B cell (primary cell): ENCODE measurements at regions of chr1 and their contacts with region 1.

Region 1: GRCh38 chr1:28208818-28209441 is 23.9 kb downstream of the DNAJC8 start:
- DNase-seq: peak; percentile 80
- ATAC-seq: peak; percentile 86
- H3K4me3 ChIP-seq: no peak overlapping the region
- H3K4me3 Mint-ChIP-seq: no peak overlapping the region
- H3K27ac ChIP-seq: no peak overlapping the region
- H3K27ac Mint-ChIP-seq: no peak overlapping the region
- H3K4me1 ChIP-seq: no peaks in the 10 kb centered on the region
- H3K4me1 Mint-ChIP-seq: peaks cover 2% of the 10 kb centered on the region
- H3K27me3 ChIP-seq: no peaks in the 10 kb centered on the region
- H3K27me3 Mint-ChIP-seq: no peaks in the 10 kb centered on the region
- CTCF ChIP-seq: peak; percentile 91

Region 2: DNA sequence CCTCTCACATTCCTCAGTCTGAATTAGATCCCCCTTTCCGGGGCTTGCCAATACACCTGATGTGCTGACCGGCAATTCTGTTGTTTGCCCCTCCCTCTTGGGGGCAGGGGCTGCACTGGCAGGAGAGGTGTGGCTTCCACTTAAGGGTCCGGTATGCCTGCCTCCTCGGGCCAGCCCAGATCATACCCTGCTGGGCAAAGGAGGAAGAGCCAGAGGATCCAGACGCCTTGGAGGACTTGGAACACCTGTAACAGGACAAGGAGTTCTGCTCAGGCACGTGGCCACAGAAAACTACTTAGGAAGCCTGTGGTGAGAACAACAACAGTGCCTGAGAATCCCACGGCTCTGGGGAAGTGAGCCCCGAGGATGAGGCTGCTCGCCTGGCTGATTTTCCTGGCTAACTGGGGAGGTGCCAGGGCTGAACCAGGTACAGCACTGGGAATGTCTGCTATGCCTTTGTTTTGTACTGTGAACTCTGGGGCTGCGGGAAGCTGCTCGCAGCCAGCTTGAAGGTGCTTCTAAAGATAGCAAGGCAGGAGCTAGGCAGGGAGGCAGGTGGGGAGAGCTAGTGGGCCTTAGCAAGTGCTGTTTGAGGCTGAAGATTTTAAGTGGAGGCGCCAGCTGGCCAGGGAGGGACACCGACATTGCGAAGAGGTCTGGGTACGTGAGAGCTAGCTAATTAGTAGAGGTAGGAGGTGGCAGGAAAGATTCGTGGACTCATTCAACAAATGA is 273.9 kb before region 1 on chr1 and contains the start of gene SMPDL3B:
- CTCF ChIA-PET with region 1: interaction called, 16 read pairs
- POLR2A ChIA-PET with region 1: interaction called, 10 read pairs
- intact Hi-C with region 1: no loop called
- DNase-seq: no peak
- ATAC-seq: no peak
- H3K4me3 ChIP-seq: peak within 1 kb of the TSS in 1 of 5 experiments; percentile 21
- H3K4me3 Mint-ChIP-seq: peak within 1 kb of the TSS; percentile 4
- H3K27ac ChIP-seq: no peak within 1 kb of the TSS
- H3K27ac Mint-ChIP-seq: no peak within 1 kb of the TSS
- H3K4me1 ChIP-seq: peaks cover 12 to 16% of the 10 kb centered on the region in 2 donors
- H3K4me1 Mint-ChIP-seq: peaks cover 21% of the 10 kb centered on the region
- H3K27me3 ChIP-seq: peaks cover 0 to 19% (median 9%) of the 10 kb centered on the region in 4 experiments
- H3K27me3 Mint-ChIP-seq: peaks cover 18% of the 10 kb centered on the region
- CTCF ChIP-seq: no peak
- total RNA-seq, gene SMPDL3B: not detected in 2 replicates

Region 3: DNA sequence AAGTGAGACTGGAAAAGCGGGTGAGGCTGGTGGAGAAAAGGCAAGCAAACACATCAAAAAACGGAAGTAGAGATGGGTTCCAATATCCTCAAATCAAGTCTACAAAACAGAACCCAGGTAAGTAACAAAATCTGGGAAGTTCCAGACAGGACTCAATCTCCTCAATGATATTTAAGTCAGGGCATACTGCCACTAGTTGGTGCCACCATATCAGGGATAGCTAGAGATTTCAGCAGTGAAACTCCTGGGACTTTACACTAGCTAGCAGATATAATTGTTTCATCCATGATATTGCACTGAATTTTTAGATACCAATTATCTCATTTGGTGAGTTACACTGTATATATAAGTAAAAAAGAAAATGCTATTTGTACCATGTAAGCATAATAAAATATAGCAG is 172.5 kb before region 1 on chr1:
- CTCF ChIA-PET with region 1: interaction called, 11 read pairs
- POLR2A ChIA-PET with region 1: no interaction called
- intact Hi-C with region 1: no loop called
- DNase-seq: no peak
- ATAC-seq: no peak
- H3K4me3 ChIP-seq: no peak overlapping the region
- H3K4me3 Mint-ChIP-seq: no peak overlapping the region
- H3K27ac ChIP-seq: no peak overlapping the region
- H3K27ac Mint-ChIP-seq: no peak overlapping the region
- H3K4me1 ChIP-seq: no peaks in the 10 kb centered on the region
- H3K4me1 Mint-ChIP-seq: peaks cover 3% of the 10 kb centered on the region
- H3K27me3 ChIP-seq: no peaks in the 10 kb centered on the region
- H3K27me3 Mint-ChIP-seq: no peaks in the 10 kb centered on the region
- CTCF ChIP-seq: no peak

Region 4: GRCh38 chr1:28096205-28097099 is 112.5 kb before region 1 on chr1:
- CTCF ChIA-PET with region 1: interaction called, 357 read pairs
- POLR2A ChIA-PET with region 1: interaction called, 5 read pairs
- intact Hi-C with region 1: loop called (anchors 1 kb)
- DNase-seq: no peak
- ATAC-seq: peak; percentile 39
- H3K4me3 ChIP-seq: no peak overlapping the region
- H3K4me3 Mint-ChIP-seq: no peak overlapping the region
- H3K27ac ChIP-seq: no peak overlapping the region
- H3K27ac Mint-ChIP-seq: no peak overlapping the region
- H3K4me1 ChIP-seq: no peaks in the 10 kb centered on the region
- H3K4me1 Mint-ChIP-seq: no peaks in the 10 kb centered on the region
- H3K27me3 ChIP-seq: no peaks in the 10 kb centered on the region
- H3K27me3 Mint-ChIP-seq: no peaks in the 10 kb centered on the region
- CTCF ChIP-seq: no peak

Region 5: DNA sequence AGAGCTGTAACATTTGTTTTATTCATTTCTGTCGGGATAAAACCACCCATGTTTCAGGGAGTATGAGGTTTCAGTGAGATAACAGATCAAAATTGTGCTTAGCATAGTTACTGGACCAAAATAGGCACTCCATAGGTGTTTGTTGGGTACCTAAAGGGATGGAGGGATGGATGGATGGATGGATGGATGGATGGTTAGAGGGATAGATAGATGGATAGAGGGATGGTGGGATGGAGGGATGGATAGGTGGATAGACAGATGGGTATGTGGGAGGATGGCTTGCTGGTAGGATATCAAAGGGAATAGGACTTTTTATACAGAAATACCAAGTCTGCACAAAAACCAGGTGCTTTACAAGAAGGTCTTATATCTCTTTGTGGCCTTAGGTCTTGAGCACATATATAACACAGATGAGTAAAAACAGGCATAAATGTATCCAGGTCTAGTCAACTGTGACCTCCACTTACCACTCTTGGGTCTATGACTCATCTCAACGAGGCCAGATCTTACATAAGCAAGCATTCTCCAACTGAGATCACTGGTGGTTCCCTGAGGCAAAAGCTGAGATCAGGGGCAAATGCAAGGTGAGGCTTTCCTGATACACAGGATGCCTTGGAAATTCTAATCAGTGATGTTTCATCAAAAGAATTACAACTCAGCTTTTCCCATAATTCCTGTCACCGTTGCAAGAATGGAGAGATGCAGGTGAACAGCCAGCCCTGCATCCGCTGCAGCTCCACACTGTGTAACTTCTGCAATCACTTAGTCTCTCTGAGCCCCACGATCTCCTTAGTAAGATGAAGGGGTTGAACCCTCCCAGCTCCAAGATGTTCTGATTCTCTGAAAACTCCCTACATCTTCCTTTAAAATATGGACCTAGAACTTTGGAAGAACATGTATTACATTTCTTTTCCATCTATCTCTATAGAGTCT is 64.5 kb before region 1 on chr1:
- CTCF ChIA-PET with region 1: interaction called, 13 read pairs
- POLR2A ChIA-PET with region 1: no interaction called
- intact Hi-C with region 1: no loop called
- DNase-seq: peak; percentile 39
- ATAC-seq: peak; percentile 80
- H3K4me3 ChIP-seq: no peak overlapping the region
- H3K4me3 Mint-ChIP-seq: peak overlapping the region; percentile 36
- H3K27ac ChIP-seq: no peak overlapping the region
- H3K27ac Mint-ChIP-seq: peak overlapping the region; percentile 76
- H3K4me1 ChIP-seq: peaks cover 13 to 42% of the 10 kb centered on the region in 2 donors
- H3K4me1 Mint-ChIP-seq: peaks cover 40% of the 10 kb centered on the region
- H3K27me3 ChIP-seq: no peaks in the 10 kb centered on the region
- H3K27me3 Mint-ChIP-seq: no peaks in the 10 kb centered on the region
- CTCF ChIP-seq: no peak

Region 6: GRCh38 chr1:28494737-28495136 is 285.8 kb after region 1 on chr1:
- CTCF ChIA-PET with region 1: no interaction called
- POLR2A ChIA-PET with region 1: no interaction called
- intact Hi-C with region 1: no loop called
- DNase-seq: no peak
- ATAC-seq: no peak
- H3K4me3 ChIP-seq: no peak overlapping the region
- H3K4me3 Mint-ChIP-seq: no peak overlapping the region
- H3K27ac ChIP-seq: no peak overlapping the region
- H3K27ac Mint-ChIP-seq: peak overlapping the region; percentile 46
- H3K4me1 ChIP-seq: no peaks in the 10 kb centered on the region
- H3K4me1 Mint-ChIP-seq: no peaks in the 10 kb centered on the region
- H3K27me3 ChIP-seq: no peaks in the 10 kb centered on the region
- H3K27me3 Mint-ChIP-seq: no peaks in the 10 kb centered on the region
- CTCF ChIP-seq: no peak

Region 7: GRCh38 chr1:28682840-28683239 is 473.9 kb after region 1 on chr1:
- CTCF ChIA-PET with region 1: no interaction called
- POLR2A ChIA-PET with region 1: no interaction called
- intact Hi-C with region 1: no loop called
- DNase-seq: no peak
- ATAC-seq: no peak
- H3K4me3 ChIP-seq: no peak overlapping the region
- H3K4me3 Mint-ChIP-seq: no peak overlapping the region
- H3K27ac ChIP-seq: no peak overlapping the region
- H3K27ac Mint-ChIP-seq: no peak overlapping the region
- H3K4me1 ChIP-seq: no peaks in the 10 kb centered on the region
- H3K4me1 Mint-ChIP-seq: peaks cover 3% of the 10 kb centered on the region
- H3K27me3 ChIP-seq: no peaks in the 10 kb centered on the region
- H3K27me3 Mint-ChIP-seq: no peaks in the 10 kb centered on the region
- CTCF ChIP-seq: no peak